H1 (cell line): ENCODE measurements at regions of chr5 and their contacts with region 1.

Region 1: DNA sequence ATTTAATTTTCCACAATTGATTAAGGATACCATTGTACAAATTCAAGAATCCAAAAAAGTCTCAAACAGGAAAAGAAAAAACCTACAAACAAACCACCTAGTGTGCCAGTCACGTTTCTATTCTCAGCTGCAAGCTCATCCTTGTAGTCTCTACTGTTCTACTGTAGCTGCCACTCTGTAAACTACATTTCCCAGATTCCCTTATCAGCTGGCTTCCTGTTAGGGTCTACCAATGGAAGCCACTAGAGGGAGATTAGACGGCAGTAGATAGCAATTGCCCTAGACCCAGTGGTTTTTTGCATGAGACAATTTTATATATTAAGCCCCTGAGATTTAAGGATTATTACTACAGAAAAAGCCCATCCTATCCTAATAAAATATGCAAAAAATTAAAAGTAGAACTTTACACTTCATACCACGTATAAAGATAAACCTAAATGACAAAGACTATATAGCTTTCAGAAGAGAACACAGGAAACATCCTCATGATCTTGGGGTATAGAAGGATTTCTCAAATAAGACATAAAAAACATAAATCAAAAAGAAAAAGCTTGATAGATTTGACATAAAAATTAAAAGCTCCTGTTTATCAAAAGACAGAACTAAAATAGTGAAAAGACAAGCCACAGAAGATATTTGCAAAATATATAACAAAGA is 37.4 kb downstream of the P4HA2 start:
- DNase-seq: no peak
- H3K4me3 ChIP-seq: no peak overlapping the region
- H3K27ac ChIP-seq: no peak overlapping the region
- H3K4me1 ChIP-seq: no peaks in the 10 kb centered on the region
- H3K27me3 ChIP-seq: no peaks in the 10 kb centered on the region
- CTCF ChIP-seq: peak in 2 of 3 experiments; percentile 77 to 90; a peak in 3 of 4 replicates
- EP300 ChIP-seq: no peak
- POLR2A ChIP-seq: no peak
- RAD21 ChIP-seq: peak; percentile 55 to 65

Region 2: DNA sequence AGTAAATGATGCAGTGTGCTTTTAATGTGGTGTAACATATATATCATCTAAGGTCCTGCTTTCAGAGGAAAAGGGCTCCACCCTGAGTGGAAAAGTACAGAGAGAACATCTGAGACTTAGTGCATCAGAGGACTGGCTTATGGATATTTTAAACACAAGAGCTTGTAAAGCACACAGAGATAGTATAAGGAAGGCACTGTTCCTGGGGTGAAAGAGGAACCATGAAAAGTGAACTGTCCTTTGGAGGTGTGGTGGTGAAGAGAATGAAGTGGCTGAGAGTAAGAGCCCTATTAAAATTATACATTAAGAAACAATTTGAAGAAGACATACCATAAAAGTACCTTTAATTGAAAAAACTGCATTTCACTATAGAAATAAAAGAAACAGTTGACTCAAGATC is 47.8 kb before region 1 on chr5:
- CTCF ChIA-PET with region 1: no interaction called
- POLR2A ChIA-PET with region 1: no interaction called
- DNase-seq: no peak
- H3K4me3 ChIP-seq: no peak overlapping the region
- H3K27ac ChIP-seq: no peak overlapping the region
- H3K4me1 ChIP-seq: no peaks in the 10 kb centered on the region
- H3K27me3 ChIP-seq: no peaks in the 10 kb centered on the region
- CTCF ChIP-seq: no peak
- EP300 ChIP-seq: no peak
- POLR2A ChIP-seq: no peak
- RAD21 ChIP-seq: no peak

Region 3: DNA sequence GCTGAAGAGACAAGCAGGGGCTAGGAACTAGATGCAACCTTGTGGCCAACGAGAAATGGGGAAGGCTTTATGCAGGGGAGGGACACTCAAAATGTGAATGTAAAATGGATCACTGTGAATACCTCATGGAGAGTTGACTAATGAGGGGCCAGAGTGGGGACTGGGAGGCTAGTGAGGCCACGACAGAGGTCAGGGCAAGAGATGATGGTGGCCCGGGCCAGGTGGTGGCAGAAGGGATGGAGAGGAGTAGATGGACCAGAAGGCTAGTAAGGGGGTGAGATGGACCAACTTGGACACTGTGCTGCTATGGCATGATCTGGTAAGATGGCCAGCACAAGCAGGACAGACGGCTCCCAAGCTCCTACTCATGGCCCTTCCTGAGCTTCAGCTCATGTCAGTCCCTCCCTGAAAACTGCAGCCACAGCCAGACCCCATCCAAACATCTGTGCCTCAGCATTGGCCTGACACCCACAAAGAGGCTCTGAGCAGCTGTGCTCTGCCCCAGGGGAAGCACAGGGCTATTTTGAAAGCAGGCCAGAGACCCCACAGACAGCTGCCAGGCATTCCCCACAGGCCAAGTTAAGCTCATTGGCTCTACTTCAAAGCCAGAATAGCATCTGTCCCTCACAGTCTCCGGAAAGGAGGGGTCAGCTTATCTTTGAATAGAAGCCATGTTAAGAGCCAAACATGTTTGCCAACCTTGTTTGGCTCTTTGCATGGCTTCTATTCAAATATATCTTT is 15.3 kb after region 1 on chr5:
- CTCF ChIA-PET with region 1: interaction called, 46 read pairs
- POLR2A ChIA-PET with region 1: no interaction called
- DNase-seq: no peak
- H3K4me3 ChIP-seq: no peak overlapping the region
- H3K27ac ChIP-seq: no peak overlapping the region
- H3K4me1 ChIP-seq: peaks cover 0 to 5% (median 2%) of the 10 kb centered on the region in 4 experiments; a peak in 3 of 7 replicates
- H3K27me3 ChIP-seq: no peaks in the 10 kb centered on the region
- CTCF ChIP-seq: no peak
- EP300 ChIP-seq: no peak
- POLR2A ChIP-seq: no peak
- RAD21 ChIP-seq: no peak

Region 4: DNA sequence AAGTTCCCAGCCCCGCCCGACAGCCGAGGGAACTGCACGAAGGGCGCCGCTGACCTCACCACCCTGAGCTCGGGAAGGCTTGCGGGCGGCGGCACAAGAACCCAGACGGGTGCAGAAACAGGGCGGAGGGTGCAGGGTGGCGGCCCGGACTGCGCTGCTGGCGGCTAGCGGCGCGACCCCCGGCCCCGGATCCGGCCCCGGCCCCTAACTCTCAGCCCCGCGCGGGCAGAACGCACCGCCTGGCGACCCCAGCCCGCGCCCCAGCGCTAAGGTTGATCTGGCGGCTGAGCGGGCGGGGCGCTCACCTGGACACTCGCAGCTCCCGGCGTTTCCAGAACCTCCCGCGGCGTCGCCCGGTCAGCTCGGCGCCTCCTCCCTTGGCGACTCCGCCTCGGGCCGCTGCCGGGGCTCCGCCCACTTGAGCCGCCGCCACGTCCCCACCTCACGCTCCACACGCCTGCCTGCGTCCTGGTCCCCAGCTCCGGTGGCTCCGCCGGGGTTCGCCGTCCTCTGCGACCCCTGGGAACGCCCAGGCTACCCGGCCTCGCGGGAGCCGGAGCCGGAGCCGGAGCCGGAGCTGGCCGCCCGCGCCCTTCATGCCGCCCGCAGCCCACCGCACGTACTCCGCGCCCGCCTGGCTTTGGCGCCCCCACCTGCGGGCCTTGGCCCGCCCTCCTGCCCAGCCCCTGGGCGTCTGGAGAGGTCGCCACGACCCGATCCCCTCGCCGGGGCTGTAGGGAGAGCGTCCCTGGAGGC is 37.4 kb after region 1 on chr5 and contains the start of gene P4HA2:
- CTCF ChIA-PET with region 1: interaction called, 16 read pairs
- POLR2A ChIA-PET with region 1: no interaction called
- DNase-seq: peak; percentile 46 to 86
- H3K4me3 ChIP-seq: peak within 1 kb of the TSS; percentile 57 to 77 (median 60)
- H3K27ac ChIP-seq: no peak within 1 kb of the TSS; the same call in 1 of the 2 replicates
- H3K4me1 ChIP-seq: peaks cover 0 to 7% (median 5%) of the 10 kb centered on the region in 4 experiments; a peak in 4 of 7 replicates
- H3K27me3 ChIP-seq: peaks cover 3 to 22% (median 20%) of the 10 kb centered on the region in 4 experiments
- CTCF ChIP-seq: no peak
- EP300 ChIP-seq: no peak
- POLR2A ChIP-seq: peak in 1 of 2 experiments; percentile 54; a peak in 1 of 3 replicates
- RAD21 ChIP-seq: no peak; a peak in 1 of 4 replicates
- total RNA-seq, gene P4HA2: 7.4 and 8.2 TPM in 2 replicates

Region 5: DNA sequence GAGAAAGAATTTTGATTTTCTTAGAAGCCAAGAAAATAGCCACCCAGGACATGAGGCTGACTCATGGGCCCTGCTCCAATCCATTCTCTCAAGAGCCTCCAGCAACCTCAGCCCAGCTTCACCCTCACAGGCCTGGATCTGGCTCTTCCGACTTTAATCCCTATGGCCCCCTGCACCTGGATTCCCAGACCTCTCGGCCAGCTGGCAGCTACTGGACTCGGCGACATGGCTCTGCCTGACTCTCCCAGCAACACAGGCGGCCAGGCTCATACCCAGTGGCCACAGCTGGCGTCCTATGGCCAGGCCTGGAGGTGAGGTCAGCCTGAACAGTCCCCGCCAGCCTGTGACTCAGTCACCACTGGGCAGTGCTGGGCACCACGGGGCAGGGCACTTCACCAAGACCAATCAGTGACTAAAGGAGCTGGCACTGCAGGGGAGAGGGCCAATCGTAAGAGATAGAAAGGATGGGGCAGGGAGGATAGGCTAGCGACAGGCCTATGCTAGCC is 61.0 kb after region 1 on chr5:
- CTCF ChIA-PET with region 1: no interaction called
- POLR2A ChIA-PET with region 1: no interaction called
- DNase-seq: no peak
- H3K4me3 ChIP-seq: no peak overlapping the region; a peak in 1 of 8 replicates
- H3K27ac ChIP-seq: no peak overlapping the region
- H3K4me1 ChIP-seq: peaks cover 0 to 5% (median 0%) of the 10 kb centered on the region in 4 experiments; a peak in 1 of 7 replicates
- H3K27me3 ChIP-seq: peaks cover 0 to 4% (median 0%) of the 10 kb centered on the region in 4 experiments; a peak in 1 of 7 replicates
- CTCF ChIP-seq: no peak
- EP300 ChIP-seq: no peak
- POLR2A ChIP-seq: no peak
- RAD21 ChIP-seq: no peak

Region 6: DNA sequence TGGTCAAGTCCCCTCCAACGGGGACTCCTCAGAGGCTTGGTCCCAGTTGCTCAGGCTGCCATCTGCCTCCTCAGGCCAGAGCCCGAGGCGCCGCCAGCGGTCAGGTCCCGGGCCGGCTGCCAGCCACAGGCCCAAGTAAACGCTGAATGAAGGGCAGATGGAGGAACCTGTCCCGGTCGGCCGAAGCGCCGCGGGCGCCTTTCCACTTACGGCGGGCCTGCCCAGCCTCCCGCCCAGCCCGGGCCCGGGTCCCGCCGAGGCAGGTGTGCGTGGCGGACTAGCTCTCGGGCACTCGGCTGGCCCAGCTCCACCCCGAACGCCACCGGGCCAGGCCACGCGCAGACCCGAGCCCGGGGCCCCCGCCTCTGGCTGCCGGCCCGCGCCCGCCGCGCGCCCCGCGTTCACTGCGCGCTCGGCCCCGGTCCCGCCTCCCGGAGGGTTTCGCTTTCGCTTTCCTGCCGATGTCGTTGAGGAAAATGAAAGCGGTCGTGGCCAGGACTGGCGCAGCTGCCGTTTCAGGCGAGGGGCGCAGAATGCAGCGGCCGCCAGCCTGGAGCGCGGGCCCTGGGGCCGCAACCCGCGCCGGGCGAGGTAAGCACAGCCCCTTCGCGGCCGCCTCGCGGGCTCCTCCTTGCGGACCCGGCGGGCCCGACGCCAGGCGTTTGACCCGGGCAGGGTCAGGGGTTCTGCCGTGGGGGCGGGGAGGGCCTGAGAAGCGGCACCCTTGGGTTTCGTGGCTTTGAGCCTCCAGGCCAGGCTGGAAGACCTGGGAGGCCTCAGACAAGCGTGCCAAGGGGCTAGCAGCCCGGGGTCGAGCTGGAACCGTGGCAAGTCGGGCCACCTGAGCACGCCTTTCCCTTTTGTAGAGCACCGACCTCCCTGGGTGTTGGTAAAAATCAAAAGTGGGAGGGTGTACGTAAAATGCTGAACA is 220.4 kb after region 1 on chr5:
- CTCF ChIA-PET with region 1: no interaction called
- POLR2A ChIA-PET with region 1: no interaction called
- DNase-seq: peak in 1 of 2 experiments; percentile 91
- H3K4me3 ChIP-seq: peak overlapping the region; percentile 36 to 79 (median 58)
- H3K27ac ChIP-seq: peak overlapping the region; percentile 40; the same call in 1 of the 2 replicates
- H3K4me1 ChIP-seq: peaks cover 0 to 4% (median under 1%) of the 10 kb centered on the region in 4 experiments; a peak in 3 of 7 replicates
- H3K27me3 ChIP-seq: 0 out of 7 replicates have a peak, but pooled peaks cover 0 to 3% (median 0%) of the 10 kb centered on the region in 4 experiments
- CTCF ChIP-seq: peak; percentile 68 to 88 (median 82)
- EP300 ChIP-seq: no peak
- POLR2A ChIP-seq: peak in 1 of 2 experiments; percentile 55; a peak in 2 of 3 replicates
- RAD21 ChIP-seq: peak; percentile 61 to 78

Region 7: GRCh38 chr5:132426525-132427138 is 236.3 kb after region 1 on chr5:
- CTCF ChIA-PET with region 1: no interaction called
- POLR2A ChIA-PET with region 1: no interaction called
- DNase-seq: peak in 1 of 2 experiments; percentile 51
- H3K4me3 ChIP-seq: no peak overlapping the region
- H3K27ac ChIP-seq: no peak overlapping the region; the same call in 1 of the 2 replicates
- H3K4me1 ChIP-seq: peaks cover 0 to 9% (median 5%) of the 10 kb centered on the region in 4 experiments; a peak in 5 of 7 replicates
- H3K27me3 ChIP-seq: no peaks in the 10 kb centered on the region; a peak in 1 of 7 replicates
- CTCF ChIP-seq: peak; percentile 51 to 66 (median 63)
- EP300 ChIP-seq: 0 out of 3 replicates have a peak, but pooled peaks of 1 of the 2 experiments have one; percentile 26
- POLR2A ChIP-seq: no peak
- RAD21 ChIP-seq: peak; percentile 60 to 79